Heart left ventricle (tissue), 16 donors: ENCODE measurements at regions of chr1 and their contacts with region 1.

Region 1: GRCh38 chr1:109426278-109427170 is at the start of gene PSMA5:
- DNase-seq: peak; percentile 96 to 98 (median 97)
- ATAC-seq: peak; percentile 99
- H3K4me3 ChIP-seq: peak within 1 kb of the TSS; percentile 63 to 96 (median 91)
- H3K27ac ChIP-seq: peak within 1 kb of the TSS; percentile 31 to 92 (median 83)
- H3K4me1 ChIP-seq: peaks cover 6 to 46% (median 24%) of the 10 kb centered on the region in 12 donors
- H3K27me3 ChIP-seq: no peaks in the 10 kb centered on the region
- CTCF ChIP-seq: no peak
- POLR2A ChIP-seq: peak in 1 of 2 donors; percentile 79
- total RNA-seq, gene PSMA5: 24.3 to 74.9 (median 61.0) TPM

Region 2: GRCh38 chr1:109253484-109254141 is 172.9 kb before region 1 on chr1:
- intact Hi-C with region 1: no loop called
- DNase-seq: peak in 1 of 5 donors; percentile 44
- ATAC-seq: peak in 2 of 4 donors; percentile 4 to 41
- H3K4me3 ChIP-seq: no peak overlapping the region
- H3K27ac ChIP-seq: peak overlapping the region in 11 of 12 donors; percentile 47 to 87 (median 64)
- H3K4me1 ChIP-seq: peaks cover 0 to 41% (median 21%) of the 10 kb centered on the region in 12 donors
- H3K27me3 ChIP-seq: peaks cover 0 to 20% (median 0%) of the 10 kb centered on the region in 9 donors
- CTCF ChIP-seq: no peak
- POLR2A ChIP-seq: no peak

Region 3: DNA sequence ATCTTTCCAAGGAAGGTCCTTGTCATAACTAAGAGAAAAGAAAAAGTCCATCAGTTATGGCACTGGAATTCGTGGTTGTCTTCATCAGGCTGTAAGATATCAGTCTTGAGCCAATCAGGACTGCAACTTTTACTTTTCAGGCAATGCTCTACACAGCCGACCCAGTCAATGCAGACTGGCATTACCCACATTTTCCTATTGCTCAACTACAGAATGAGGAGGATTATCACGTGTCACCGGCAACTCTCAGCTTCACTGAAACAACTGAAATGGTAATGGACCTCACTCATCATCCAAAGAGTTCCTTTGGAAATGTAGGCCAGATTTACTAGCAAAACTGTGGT is 55.1 kb before region 1 on chr1:
- intact Hi-C with region 1: no loop called
- DNase-seq: peak in 1 of 5 donors; percentile 33
- ATAC-seq: peak; percentile 60 to 88 (median 82)
- H3K4me3 ChIP-seq: peak overlapping the region in 4 of 12 donors; percentile 7 to 18 (median 16)
- H3K27ac ChIP-seq: peak overlapping the region; percentile 48 to 86 (median 75)
- H3K4me1 ChIP-seq: peaks cover 0 to 60% (median 29%) of the 10 kb centered on the region in 12 donors
- H3K27me3 ChIP-seq: no peaks in the 10 kb centered on the region
- CTCF ChIP-seq: no peak
- POLR2A ChIP-seq: no peak

Region 4: GRCh38 chr1:109466452-109467300 is 40.2 kb after region 1 on chr1 and contains the start of gene SYPL2:
- intact Hi-C with region 1: loop called in 3 of 10 experiments (anchors 1 to 5 kb)
- DNase-seq: peak; percentile 69 to 86 (median 83)
- ATAC-seq: peak; percentile 76 to 92 (median 88)
- H3K4me3 ChIP-seq: peak within 1 kb of the TSS; percentile 56 to 78 (median 66)
- H3K27ac ChIP-seq: peak within 1 kb of the TSS; percentile 56 to 93 (median 84)
- H3K4me1 ChIP-seq: peaks cover 0 to 19% (median 6%) of the 10 kb centered on the region in 12 donors
- H3K27me3 ChIP-seq: peaks cover 0 to 74% (median 16%) of the 10 kb centered on the region in 9 donors
- CTCF ChIP-seq: peak in 2 of 12 donors; percentile 20
- POLR2A ChIP-seq: peak in 1 of 2 donors; percentile 29
- total RNA-seq, gene SYPL2: 11.3 to 39.7 (median 25.4) TPM

Region 5: DNA sequence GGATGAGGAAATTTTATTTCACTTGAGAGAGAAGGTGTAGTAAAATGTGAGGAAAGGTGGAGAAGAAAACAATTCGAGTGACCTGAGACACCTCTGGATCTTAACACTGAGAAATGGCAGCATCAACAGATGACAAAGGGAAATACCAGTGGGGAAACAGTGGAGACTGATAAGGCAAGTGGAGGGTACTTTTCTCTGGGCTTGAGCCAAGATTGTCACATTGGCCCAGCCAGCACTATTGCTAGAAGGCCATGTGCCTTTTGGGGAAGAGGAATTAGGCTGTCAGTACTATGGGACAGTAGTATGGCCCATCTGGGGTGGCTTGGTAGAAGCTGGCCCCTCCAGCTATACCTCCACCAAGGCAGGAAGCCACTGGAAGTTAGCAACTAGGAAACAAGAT is 48.2 kb after region 1 on chr1:
- intact Hi-C with region 1: loop called in 2 of 10 experiments (anchors 5 kb)
- DNase-seq: peak in 1 of 5 donors; percentile 21
- ATAC-seq: peak; percentile 55 to 70 (median 65)
- H3K4me3 ChIP-seq: no peak overlapping the region
- H3K27ac ChIP-seq: no peak overlapping the region
- H3K4me1 ChIP-seq: peaks cover 0 to 21% (median 5%) of the 10 kb centered on the region in 12 donors
- H3K27me3 ChIP-seq: peaks cover 0 to 23% (median 0%) of the 10 kb centered on the region in 9 donors
- CTCF ChIP-seq: no peak
- POLR2A ChIP-seq: no peak

Region 6: DNA sequence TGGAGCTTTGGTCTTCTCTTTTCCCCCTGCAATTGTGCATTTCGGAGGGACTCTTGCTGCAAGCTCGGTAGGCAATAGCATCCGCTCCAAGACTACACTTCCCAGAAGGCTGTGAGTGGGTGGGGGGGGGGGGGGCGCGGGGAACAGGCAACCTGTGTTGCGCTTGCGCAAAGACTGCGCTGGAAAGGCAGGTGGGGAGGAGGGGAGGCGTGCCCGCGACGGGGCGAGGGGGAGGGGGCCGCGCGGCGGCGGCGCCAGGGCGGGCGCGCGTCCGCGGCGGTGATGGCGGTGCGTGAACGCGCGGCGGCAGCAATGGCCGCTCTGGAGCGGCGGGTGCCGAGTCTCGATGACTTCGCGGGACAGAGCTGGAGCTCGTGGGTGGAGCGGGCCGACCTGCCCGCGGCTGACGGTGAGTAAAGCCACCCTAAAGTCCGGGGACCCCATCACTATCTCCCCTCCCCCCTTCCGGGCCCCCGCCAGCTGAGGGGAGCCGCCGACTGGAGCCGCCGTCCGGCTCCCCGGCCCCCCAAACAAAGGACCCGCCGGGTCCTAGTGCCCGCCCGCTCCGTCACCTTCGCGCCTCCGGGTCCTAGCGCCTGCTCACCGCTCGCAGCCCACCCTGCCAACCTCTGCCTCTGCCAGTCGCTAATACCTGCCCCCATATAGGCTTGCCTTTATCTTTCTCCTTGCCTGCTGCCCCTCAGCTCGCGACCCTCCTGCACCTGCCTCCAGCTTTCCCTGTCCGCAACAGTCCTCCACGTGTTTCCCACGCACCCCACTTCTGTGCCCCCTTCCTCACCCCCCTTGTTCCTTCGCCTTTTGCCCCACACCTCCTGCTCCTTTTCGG is 57.4 kb after region 1 on chr1 and contains the start of gene ATXN7L2:
- intact Hi-C with region 1: loop called in 7 of 10 experiments (anchors 5 kb)
- DNase-seq: peak; percentile 93 to 96 (median 94)
- ATAC-seq: peak; percentile 70 to 95 (median 90)
- H3K4me3 ChIP-seq: peak within 1 kb of the TSS; percentile 55 to 92 (median 80)
- H3K27ac ChIP-seq: peak within 1 kb of the TSS; percentile 87 to 100 (median 98)
- H3K4me1 ChIP-seq: peaks cover 0 to 23% (median 14%) of the 10 kb centered on the region in 12 donors
- H3K27me3 ChIP-seq: peaks cover 0 to 2% (median 0%) of the 10 kb centered on the region in 9 donors
- CTCF ChIP-seq: no peak
- POLR2A ChIP-seq: peak in 1 of 2 donors; percentile 46
- total RNA-seq, gene ATXN7L2: 1.2 to 2.8 (median 2.1) TPM